Adrenal gland (tissue), 19 donors: ENCODE measurements at regions of chr7 and their contacts with region 1.

Region 1: GRCh38 chr7:150417863-150418262 is 32.6 kb upstream of the GIMAP8 start:
- DNase-seq: peak in 2 of 7 donors; percentile 16 to 38
- H3K4me3 ChIP-seq: no peak overlapping the region
- H3K27ac ChIP-seq: no peak overlapping the region
- H3K4me1 ChIP-seq: no peaks in the 10 kb centered on the region
- H3K27me3 ChIP-seq: no peaks in the 10 kb centered on the region
- CTCF ChIP-seq: no peak
- POLR2A ChIP-seq: no peak

Region 2: DNA sequence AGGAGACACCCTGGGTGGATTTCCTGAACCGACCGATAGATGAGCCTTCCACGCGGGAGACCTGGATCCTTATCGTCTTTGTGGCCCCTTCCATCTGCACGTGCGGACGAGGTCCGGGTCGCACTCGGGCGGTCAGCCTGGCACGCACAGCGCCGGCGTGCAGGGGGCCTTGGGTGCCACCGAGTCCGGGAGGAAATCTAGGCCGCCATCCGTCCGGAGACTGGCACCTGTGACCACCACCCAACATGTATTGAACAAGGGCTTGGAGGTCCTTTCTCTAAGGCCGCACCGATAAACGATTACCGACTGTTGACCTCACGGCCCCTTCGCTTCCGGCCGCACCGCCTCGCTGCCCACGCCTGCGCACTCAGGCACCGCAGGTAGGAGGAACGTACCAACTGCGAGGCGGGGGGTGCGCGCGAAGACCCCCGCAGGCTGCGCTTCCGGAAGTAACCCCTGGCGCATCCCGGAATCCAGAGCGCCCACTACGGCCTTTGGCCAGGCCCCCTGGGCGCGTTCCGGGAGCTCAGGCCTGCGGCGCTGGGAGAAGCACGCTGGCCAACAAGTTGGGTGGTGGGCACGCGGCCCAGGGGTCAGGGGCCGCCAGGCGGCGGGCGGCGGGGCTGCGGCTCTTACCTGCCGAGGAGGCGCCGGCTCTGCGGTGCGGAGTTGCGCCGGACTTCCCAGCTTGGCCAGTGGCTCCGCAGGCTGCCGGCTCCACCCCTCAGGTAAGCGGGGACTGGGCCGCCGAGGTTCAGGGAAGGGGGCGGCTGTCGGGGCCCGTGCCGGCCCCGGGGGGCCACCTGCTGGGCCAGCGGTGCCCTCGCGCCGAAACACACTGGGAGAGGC is 94.8 kb before region 1 on chr7 and contains the starts of genes ACTR3C and LRRC61:
- intact Hi-C with region 1: no loop called
- DNase-seq: peak; percentile 55 to 70 (median 64)
- H3K4me3 ChIP-seq: peak within 1 kb of the TSS; percentile 16 to 88 (median 46)
- H3K27ac ChIP-seq: peak within 1 kb of the TSS; percentile 78 to 97 (median 90)
- H3K4me1 ChIP-seq: peaks cover 19 to 68% of the 10 kb centered on the region in 2 donors
- H3K27me3 ChIP-seq: no peaks in the 10 kb centered on the region
- CTCF ChIP-seq: peak in 3 of 6 experiments; percentile 7 to 29 (median 17)
- POLR2A ChIP-seq: peak in 1 of 2 donors; percentile 24
- total RNA-seq, gene ACTR3C: 14.5 to 50.0 (median 31.8) TPM
- total RNA-seq, gene LRRC61: 11.4 to 1,435 (median 224) TPM

Region 3: DNA sequence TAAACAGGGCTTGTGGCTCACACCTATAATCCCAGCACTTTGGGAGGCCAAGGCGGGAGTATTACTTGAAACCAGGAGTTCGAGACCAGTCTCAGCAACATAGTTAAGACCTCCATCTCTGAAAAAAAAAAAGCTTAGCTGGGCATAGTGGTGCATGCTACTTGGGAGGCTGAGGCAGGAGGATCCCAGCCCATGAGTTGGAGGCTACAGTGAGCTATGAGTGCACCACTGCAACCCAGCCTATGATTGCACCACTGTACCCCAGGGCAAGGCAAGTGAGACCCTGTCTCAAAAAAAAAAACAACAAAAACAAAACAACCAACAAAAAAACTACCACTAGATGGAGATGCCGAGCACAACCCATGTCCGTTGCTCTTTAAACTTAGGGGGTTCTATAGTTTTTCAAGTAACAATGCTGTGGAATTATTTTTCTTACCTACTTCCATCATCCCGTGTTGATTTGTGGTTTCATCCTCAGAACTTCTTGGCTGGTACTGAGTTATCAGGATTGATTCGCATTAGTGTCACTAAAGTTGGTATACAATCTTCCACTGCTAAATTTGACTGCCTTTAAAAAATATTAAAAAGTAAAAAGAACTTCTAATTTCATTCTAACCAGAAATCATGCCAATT is 61.5 kb before region 1 on chr7:
- intact Hi-C with region 1: loop called (anchors 5 to 10 kb)
- DNase-seq: no peak
- H3K4me3 ChIP-seq: no peak overlapping the region
- H3K27ac ChIP-seq: no peak overlapping the region
- H3K4me1 ChIP-seq: peaks cover 0 to 3% of the 10 kb centered on the region in 2 donors
- H3K27me3 ChIP-seq: no peaks in the 10 kb centered on the region
- CTCF ChIP-seq: peak; percentile 46 to 77 (median 56)
- POLR2A ChIP-seq: no peak

Region 4: GRCh38 chr7:150538259-150538658 is 120.4 kb after region 1 on chr7:
- intact Hi-C with region 1: no loop called
- DNase-seq: no peak
- H3K4me3 ChIP-seq: no peak overlapping the region
- H3K27ac ChIP-seq: no peak overlapping the region
- H3K4me1 ChIP-seq: no peaks in the 10 kb centered on the region
- H3K27me3 ChIP-seq: no peaks in the 10 kb centered on the region
- CTCF ChIP-seq: no peak
- POLR2A ChIP-seq: no peak